ENCODE measurements at regions of chr5 and their contacts with region 1.

Region 1: GRCh38 chr5:671459-672328 is 21.5 kb downstream of the TPPP start:
- DNase-seq: peak; percentile 9 to 25 (median 22)
- H3K4me3 ChIP-seq: no peak overlapping the region
- H3K4me3 Mint-ChIP-seq: peak overlapping the region in 1 of 2 donors; percentile 55
- H3K27ac ChIP-seq: no peak overlapping the region
- H3K27ac Mint-ChIP-seq: no peak overlapping the region
- H3K4me1 ChIP-seq: no peaks in the 10 kb centered on the region
- H3K4me1 Mint-ChIP-seq: peaks cover 4% of the 10 kb centered on the region
- H3K27me3 ChIP-seq: peaks cover 0 to 17% of the 10 kb centered on the region in 2 donors
- H3K27me3 Mint-ChIP-seq: peaks cover 3 to 38% (median 10%) of the 10 kb centered on the region in 3 donors
- CTCF ChIP-seq: peak; percentile 81

Region 2: GRCh38 chr5:652773-653350 is 18.8 kb before region 1 on chr5:
- intact Hi-C with region 1: no loop called
- DNase-seq: no peak
- H3K4me3 ChIP-seq: no peak overlapping the region
- H3K4me3 Mint-ChIP-seq: no peak overlapping the region
- H3K27ac ChIP-seq: no peak overlapping the region
- H3K27ac Mint-ChIP-seq: peak overlapping the region in 1 of 7 donors; percentile 10
- H3K4me1 ChIP-seq: no peaks in the 10 kb centered on the region
- H3K4me1 Mint-ChIP-seq: no peaks in the 10 kb centered on the region
- H3K27me3 ChIP-seq: no peaks in the 10 kb centered on the region
- H3K27me3 Mint-ChIP-seq: no peaks in the 10 kb centered on the region
- CTCF ChIP-seq: no peak

Region 3: DNA sequence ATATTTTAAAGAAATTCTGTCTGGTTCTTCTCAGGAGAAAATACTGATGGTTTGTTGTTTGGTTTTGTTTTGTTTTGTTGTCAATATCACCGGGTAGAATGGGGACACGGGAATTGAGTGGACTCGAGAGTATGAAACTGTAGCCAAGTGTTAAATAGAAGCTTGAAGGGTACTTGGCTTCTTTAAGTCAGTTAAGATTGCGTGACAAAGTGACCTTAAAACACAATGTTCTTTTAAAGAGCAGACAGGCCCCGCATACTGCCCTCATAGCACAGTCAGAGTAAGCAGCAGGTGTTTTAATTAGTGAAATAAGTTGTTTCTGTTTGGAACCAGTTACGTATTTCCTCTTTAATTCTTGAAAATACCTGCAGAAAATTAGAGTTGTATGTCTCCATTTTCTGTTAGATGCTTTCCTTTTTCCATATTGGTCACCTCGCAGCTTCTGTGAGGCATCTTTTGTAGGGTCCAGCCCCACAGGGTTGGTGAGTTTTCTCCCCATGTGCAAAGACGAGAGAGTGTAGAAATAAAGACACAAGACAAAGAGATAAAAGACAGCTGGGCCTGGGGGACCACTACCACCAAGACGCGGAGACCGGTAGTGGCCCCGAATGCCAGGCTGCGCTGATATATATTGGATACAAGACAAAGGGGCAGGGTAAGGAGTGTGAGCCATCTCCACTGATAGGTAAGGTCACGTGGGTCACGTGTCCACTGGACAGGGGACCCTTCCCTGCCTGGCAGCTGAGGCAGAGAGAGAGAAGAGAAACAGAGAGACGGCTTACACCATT is 230.6 kb after region 1 on chr5:
- intact Hi-C with region 1: loop called (anchors 5 to 10 kb)
- DNase-seq: no peak
- H3K4me3 ChIP-seq: no peak overlapping the region
- H3K4me3 Mint-ChIP-seq: no peak overlapping the region
- H3K27ac ChIP-seq: no peak overlapping the region
- H3K27ac Mint-ChIP-seq: peak overlapping the region in 1 of 7 donors; percentile 13
- H3K4me1 ChIP-seq: no peaks in the 10 kb centered on the region
- H3K4me1 Mint-ChIP-seq: no peaks in the 10 kb centered on the region
- H3K27me3 ChIP-seq: no peaks in the 10 kb centered on the region
- H3K27me3 Mint-ChIP-seq: no peaks in the 10 kb centered on the region
- CTCF ChIP-seq: no peak